Activated T-helper 1 cell treated with anti-CD3 and anti-CD28 coated beads, Interleukin-12 subunit alpha, Interleukin-12 subunit beta, Interleukin-2, Interleukin-4 antibody, amounts not matched to agents 30 ng/mL and 10 ng/mL and 1 ng/mL, durations not matched to agents 14 hours and 24 hours and 36 hours (primary cell): ENCODE measurements at regions of chr1 and their contacts with region 1.

Region 1: DNA sequence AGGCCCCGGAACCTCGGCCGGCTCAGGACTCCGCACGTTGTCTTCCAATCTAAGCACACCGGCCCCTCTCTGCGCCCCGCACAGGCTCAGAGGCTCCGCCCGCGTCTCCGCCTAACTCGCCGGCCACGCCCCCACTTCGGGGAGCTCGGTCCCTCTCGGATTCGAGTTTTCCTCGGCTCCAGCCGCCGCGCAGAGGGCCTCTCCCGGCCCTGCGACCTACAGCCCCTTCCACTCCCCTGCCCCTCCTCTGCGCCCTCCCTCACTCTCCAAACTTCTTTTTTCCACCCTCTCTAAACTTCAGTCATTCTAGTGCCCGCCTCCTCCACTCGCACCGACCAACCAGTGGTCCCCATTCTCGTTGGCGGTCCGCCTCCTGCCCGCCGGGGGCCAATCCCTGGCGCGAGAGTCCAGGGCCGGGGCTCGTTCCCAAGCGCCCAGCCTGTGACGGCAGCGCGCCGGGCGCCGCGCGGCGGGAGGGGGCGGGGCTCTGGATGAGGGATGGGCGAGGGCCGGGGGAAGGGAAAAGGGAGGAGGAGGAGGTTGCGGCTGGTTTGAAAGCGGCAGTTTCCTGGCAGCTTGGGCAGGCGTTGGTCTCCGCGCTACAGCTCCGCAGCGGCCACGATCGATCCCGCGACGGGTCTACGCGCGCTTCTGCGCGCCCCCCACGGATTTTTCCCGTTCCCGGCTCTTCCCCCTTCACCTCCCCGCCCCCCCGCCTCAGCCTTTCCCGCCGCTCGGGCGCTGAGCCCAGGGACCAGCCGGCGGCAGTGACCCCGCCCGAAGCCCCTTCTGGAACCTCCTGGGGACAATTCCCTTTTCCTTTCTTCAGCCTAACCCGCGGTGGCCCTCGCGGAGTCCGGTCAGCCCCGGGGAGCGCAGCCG is at the start of gene MAGI3:
- DNase-seq: peak; percentile 95
- H3K4me3 Mint-ChIP-seq: peak within 1 kb of the TSS; percentile 88
- H3K27ac Mint-ChIP-seq: peak within 1 kb of the TSS; percentile 79
- H3K4me1 Mint-ChIP-seq: peaks cover 30% of the 10 kb centered on the region
- H3K27me3 Mint-ChIP-seq: peaks cover 33% of the 10 kb centered on the region
- total RNA-seq, gene MAGI3: 3.0 and 3.2 TPM in 2 replicates

Region 2: DNA sequence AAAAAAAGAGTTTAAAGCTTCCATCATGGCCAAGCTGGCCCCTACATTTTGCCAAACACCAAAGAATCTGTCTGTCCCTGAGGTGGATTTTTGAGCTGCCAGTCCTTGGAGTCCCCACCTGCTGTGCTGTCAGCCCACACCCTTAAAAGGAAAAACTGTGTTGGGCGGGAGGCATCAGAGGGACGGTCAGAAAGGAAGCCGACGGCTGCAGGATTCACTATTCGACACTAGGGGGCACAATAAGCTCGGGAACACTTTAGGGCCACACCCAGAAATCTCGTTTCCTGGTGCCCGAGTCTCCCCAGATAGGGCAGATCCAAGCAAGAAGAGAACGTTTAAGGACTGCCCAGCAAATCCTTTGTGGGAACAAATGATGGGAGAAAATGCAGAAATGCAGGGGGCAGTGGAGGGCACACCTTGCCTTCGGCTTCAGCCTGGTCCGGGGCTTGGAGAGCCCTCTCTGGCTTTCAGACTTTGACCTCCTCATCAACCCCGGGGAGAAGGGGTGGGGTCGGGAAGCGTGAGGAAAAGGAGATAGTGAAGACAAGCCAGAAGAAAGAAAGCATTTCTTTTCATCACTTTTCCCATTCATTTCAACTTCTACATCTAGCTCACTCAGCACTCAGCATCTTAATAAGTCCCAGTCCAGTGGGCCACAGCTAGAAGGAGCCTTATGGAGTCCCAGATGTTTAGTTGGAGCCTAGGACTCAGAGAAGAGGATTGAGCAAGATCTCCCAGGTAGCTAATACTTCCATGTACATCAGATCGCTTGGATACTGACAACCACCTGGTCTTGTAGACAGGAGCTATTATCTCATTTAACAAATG is 999.2 kb before region 1 on chr1:
- intact Hi-C with region 1: loop called (anchors 10 kb)
- DNase-seq: peak; percentile 75
- H3K4me3 Mint-ChIP-seq: peak overlapping the region; percentile 70
- H3K27ac Mint-ChIP-seq: peak overlapping the region; percentile 15
- H3K4me1 Mint-ChIP-seq: peaks cover 37% of the 10 kb centered on the region
- H3K27me3 Mint-ChIP-seq: peaks cover 1% of the 10 kb centered on the region

Region 3: DNA sequence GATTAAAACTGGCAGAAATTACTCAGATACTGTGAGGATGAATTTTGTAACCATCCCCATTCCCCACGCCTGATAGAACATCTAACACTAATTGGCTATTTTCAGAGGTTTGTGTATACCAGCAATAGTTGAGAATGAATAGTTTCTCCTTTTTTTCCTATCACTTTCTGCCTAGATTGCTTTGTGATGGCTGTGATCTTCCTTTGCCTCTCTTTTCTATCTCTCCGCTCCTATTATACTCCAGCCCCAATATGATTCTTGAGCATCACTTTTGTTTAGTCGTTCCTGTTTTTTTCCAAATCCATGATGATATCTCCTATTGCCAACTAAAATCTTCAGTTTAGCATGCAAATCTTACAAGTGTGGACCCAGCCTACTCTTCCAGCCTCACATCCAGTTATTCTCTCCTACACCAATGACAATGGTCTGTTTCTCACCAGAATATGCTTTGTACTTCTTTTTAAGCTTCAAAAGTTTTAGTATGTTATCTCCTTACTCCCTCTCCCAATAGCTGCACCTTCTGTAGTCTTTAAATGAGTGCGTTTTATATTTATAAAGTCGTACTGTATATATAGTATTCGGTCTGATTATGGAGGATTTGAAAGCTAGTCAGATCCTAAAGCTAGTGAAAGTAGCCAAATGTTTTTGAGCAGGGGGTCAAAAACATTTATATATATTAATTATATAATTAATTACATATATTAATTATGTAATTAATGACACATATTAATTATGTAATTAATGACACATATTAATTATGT is 25.3 kb after region 1 on chr1:
- intact Hi-C with region 1: loop called (anchors 1 kb)
- DNase-seq: no peak
- H3K4me3 Mint-ChIP-seq: no peak overlapping the region
- H3K27ac Mint-ChIP-seq: no peak overlapping the region
- H3K4me1 Mint-ChIP-seq: no peaks in the 10 kb centered on the region
- H3K27me3 Mint-ChIP-seq: peaks cover 2% of the 10 kb centered on the region

Region 4: GRCh38 chr1:113534130-113534817 is 144.1 kb after region 1 on chr1:
- intact Hi-C with region 1: no loop called
- DNase-seq: no peak
- H3K4me3 Mint-ChIP-seq: no peak overlapping the region
- H3K27ac Mint-ChIP-seq: no peak overlapping the region
- H3K4me1 Mint-ChIP-seq: no peaks in the 10 kb centered on the region
- H3K27me3 Mint-ChIP-seq: no peaks in the 10 kb centered on the region

Region 5: GRCh38 chr1:113759333-113760101 is 369.3 kb after region 1 on chr1 and contains the start of gene PHTF1:
- intact Hi-C with region 1: loop called (anchors 2 kb)
- DNase-seq: peak; percentile 53
- H3K4me3 Mint-ChIP-seq: peak within 1 kb of the TSS; percentile 95
- H3K27ac Mint-ChIP-seq: peak within 1 kb of the TSS; percentile 97
- H3K4me1 Mint-ChIP-seq: peaks cover 37% of the 10 kb centered on the region
- H3K27me3 Mint-ChIP-seq: no peaks in the 10 kb centered on the region
- total RNA-seq, gene PHTF1: 14.7 and 16.6 TPM in 2 replicates

Region 6: GRCh38 chr1:113904674-113905434 is 514.7 kb after region 1 on chr1 and contains the starts of genes AP4B1 and DCLRE1B:
- intact Hi-C with region 1: loop called (anchors 10 kb)
- DNase-seq: peak; percentile 98
- H3K4me3 Mint-ChIP-seq: peak within 1 kb of the TSS; percentile 99
- H3K27ac Mint-ChIP-seq: peak within 1 kb of the TSS; percentile 95
- H3K4me1 Mint-ChIP-seq: peaks cover 58% of the 10 kb centered on the region
- H3K27me3 Mint-ChIP-seq: no peaks in the 10 kb centered on the region
- total RNA-seq, gene AP4B1: 36.3 and 40.9 TPM in 2 replicates
- total RNA-seq, gene DCLRE1B: 20.9 and 21.2 TPM in 2 replicates

Region 7: GRCh38 chr1:114320586-114320985 is 930.4 kb after region 1 on chr1:
- intact Hi-C with region 1: no loop called
- DNase-seq: no peak
- H3K4me3 Mint-ChIP-seq: no peak overlapping the region
- H3K27ac Mint-ChIP-seq: no peak overlapping the region
- H3K4me1 Mint-ChIP-seq: no peaks in the 10 kb centered on the region
- H3K27me3 Mint-ChIP-seq: peaks cover 9% of the 10 kb centered on the region